Heart right ventricle (tissue), 16 donors: ENCODE measurements at regions of chr12 and their contacts with region 1.

Region 1: DNA sequence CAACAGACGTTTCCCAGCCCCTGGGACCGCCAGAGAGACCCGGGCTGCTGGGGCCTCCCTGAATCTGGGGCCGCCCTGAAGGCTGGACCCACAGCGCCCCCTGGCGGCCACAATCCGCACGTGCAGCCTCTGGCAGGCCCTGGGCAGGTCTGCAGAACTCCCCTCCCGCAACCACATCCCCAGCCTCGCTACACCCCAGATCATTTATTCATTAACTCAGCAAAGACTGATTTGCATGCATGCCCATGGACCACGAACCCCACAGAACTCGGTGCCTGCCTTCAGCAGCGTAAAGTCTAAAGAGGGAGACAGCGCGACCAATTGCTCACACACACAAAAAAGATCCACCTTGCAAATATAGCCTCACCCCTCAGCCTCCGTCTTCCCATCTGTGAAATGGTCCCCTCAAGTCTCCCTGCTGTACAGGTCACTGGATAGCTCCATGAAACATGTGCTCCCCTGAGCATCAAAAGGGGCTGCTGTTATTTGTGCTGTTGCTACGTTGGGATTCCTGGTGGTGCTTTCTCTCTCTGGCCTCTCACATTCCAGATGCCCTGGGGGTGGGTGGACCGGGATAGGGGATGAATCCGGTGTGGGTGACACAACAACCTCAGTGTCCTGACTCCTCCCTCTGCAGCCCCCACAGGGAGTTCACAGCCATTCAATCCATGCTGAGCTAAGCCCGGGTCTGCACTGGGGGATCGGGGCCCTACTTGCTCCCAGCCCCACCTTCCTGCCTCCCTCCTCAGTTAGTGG is 96.4 kb downstream of the SCARB1 start:
- DNase-seq: peak; percentile 80 to 87
- ATAC-seq: peak; percentile 68 to 89 (median 83)
- H3K4me3 ChIP-seq: no peak overlapping the region
- H3K27ac ChIP-seq: peak overlapping the region in 7 of 10 donors; percentile 66 to 87 (median 81)
- H3K4me1 ChIP-seq: peaks cover 6 to 55% (median 38%) of the 10 kb centered on the region in 9 donors
- H3K27me3 ChIP-seq: peaks cover 0 to 4% (median 0%) of the 10 kb centered on the region in 7 donors
- CTCF ChIP-seq: peak; percentile 98 to 100 (median 100)

Region 2: GRCh38 chr12:123905319-123905925 is 861.8 kb before region 1 on chr12:
- intact Hi-C with region 1: loop called in 1 of 10 experiments (anchors 10 kb)
- DNase-seq: peak in 1 of 2 donors; percentile 55
- ATAC-seq: no peak
- H3K4me3 ChIP-seq: no peak overlapping the region
- H3K27ac ChIP-seq: no peak overlapping the region
- H3K4me1 ChIP-seq: peaks cover 0 to 11% (median 3%) of the 10 kb centered on the region in 9 donors
- H3K27me3 ChIP-seq: peaks cover 0 to 20% (median 6%) of the 10 kb centered on the region in 7 donors
- CTCF ChIP-seq: peak; percentile 67 to 83 (median 77)

Region 3: GRCh38 chr12:124327362-124328043 is 439.7 kb before region 1 on chr12:
- intact Hi-C with region 1: loop called in 5 of 10 experiments (anchors 5 to 10 kb)
- DNase-seq: peak in 1 of 2 donors; percentile 38
- ATAC-seq: peak; percentile 53 to 86 (median 73)
- H3K4me3 ChIP-seq: peak overlapping the region in 1 of 10 donors; percentile 9
- H3K27ac ChIP-seq: peak overlapping the region in 9 of 10 donors; percentile 44 to 90 (median 80)
- H3K4me1 ChIP-seq: peaks cover 0 to 25% (median 17%) of the 10 kb centered on the region in 9 donors
- H3K27me3 ChIP-seq: no peaks in the 10 kb centered on the region
- CTCF ChIP-seq: no peak

Region 4: GRCh38 chr12:124388679-124389536 is 378.3 kb before region 1 on chr12:
- intact Hi-C with region 1: loop called in 2 of 10 experiments (anchors 5 to 10 kb)
- DNase-seq: peak; percentile 86 to 89
- ATAC-seq: peak; percentile 53 to 71 (median 60)
- H3K4me3 ChIP-seq: peak overlapping the region; percentile 41 to 74 (median 59)
- H3K27ac ChIP-seq: peak overlapping the region; percentile 88 to 99 (median 97)
- H3K4me1 ChIP-seq: peaks cover 61 to 100% (median 89%) of the 10 kb centered on the region in 9 donors
- H3K27me3 ChIP-seq: no peaks in the 10 kb centered on the region
- CTCF ChIP-seq: peak in 3 of 9 donors; percentile 8 to 32 (median 25)

Region 5: GRCh38 chr12:124518051-124518932 is 249.0 kb before region 1 on chr12:
- intact Hi-C with region 1: loop called in 3 of 10 experiments (anchors 5 to 10 kb)
- DNase-seq: peak; percentile 98 to 99
- ATAC-seq: peak; percentile 67 to 86 (median 78)
- H3K4me3 ChIP-seq: peak overlapping the region in 9 of 10 donors; percentile 41 to 68 (median 61)
- H3K27ac ChIP-seq: peak overlapping the region; percentile 82 to 100 (median 97)
- H3K4me1 ChIP-seq: peaks cover 43 to 99% (median 86%) of the 10 kb centered on the region in 9 donors
- H3K27me3 ChIP-seq: no peaks in the 10 kb centered on the region
- CTCF ChIP-seq: no peak

Region 6: GRCh38 chr12:124680863-124681778 is 86.1 kb before region 1 on chr12:
- intact Hi-C with region 1: loop called in 2 of 10 experiments (anchors 5 kb)
- DNase-seq: peak; percentile 60 to 69
- ATAC-seq: peak in 7 of 8 donors; percentile 41 to 86 (median 72)
- H3K4me3 ChIP-seq: no peak overlapping the region
- H3K27ac ChIP-seq: peak overlapping the region; percentile 11 to 91 (median 78)
- H3K4me1 ChIP-seq: peaks cover 27 to 82% (median 61%) of the 10 kb centered on the region in 9 donors
- H3K27me3 ChIP-seq: no peaks in the 10 kb centered on the region
- CTCF ChIP-seq: peak in 7 of 9 donors; percentile 19 to 50 (median 40)

Region 7: DNA sequence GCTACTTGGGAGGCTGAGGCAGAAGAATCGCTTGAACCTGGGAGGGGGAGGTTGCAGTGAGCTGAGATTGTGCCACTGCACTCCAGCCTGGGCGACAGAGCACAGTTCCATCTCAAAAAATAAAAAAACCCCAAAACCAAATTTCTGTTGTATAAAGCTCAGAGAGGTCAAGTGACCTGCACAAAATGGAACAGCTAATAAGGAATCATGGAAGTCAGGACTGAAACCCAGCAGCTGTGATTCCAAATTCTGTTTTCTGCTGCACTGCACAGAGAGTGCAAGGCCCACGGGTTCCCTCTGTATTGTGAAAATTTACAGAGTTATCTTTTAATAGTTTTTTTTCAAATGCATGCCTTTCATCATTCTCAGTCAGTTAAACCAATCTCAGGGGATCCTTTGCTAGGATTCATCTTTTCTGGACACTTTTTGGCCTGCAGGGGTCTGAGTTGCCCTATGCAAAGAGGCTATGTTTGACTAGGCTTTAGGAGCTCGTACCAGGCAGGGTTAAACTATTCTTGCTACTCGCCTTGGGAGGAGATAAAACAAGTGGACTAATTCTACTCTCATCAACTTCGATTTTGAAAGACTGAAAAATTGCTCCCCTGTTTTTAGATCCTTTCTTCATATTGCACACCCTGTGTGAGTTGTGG is 271.9 kb after region 1 on chr12:
- intact Hi-C with region 1: no loop called
- DNase-seq: no peak
- ATAC-seq: no peak
- H3K4me3 ChIP-seq: no peak overlapping the region
- H3K27ac ChIP-seq: no peak overlapping the region
- H3K4me1 ChIP-seq: no peaks in the 10 kb centered on the region
- H3K27me3 ChIP-seq: no peaks in the 10 kb centered on the region
- CTCF ChIP-seq: no peak